Breast epithelium (tissue), 4 donors: ENCODE measurements at regions of chr9 and their contacts with region 1.

Region 1: DNA sequence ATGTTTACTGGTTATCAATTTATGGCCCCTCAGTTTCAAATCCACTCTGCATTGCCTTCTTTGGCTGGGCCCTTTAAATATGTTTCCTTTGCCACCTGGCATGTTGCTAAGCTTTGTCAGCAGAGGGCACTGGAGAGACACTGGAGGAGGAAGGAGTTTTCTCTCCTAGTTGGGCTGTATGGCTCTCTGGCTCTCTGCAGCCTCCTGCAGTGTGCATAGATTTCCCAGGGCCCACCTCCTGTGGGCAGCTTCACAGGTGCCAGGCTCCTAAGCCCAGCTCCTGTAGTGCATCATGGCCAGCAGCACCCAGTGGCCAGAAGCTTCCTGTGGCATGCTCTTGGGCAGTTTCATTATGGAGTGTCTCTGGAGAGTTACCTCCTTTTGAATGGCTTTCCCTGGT is 23.3 kb downstream of the CAVIN4 start:
- DNase-seq: no peak
- H3K4me3 ChIP-seq: no peak overlapping the region
- H3K27ac ChIP-seq: no peak overlapping the region
- H3K4me1 ChIP-seq: no peaks in the 10 kb centered on the region
- H3K27me3 ChIP-seq: no peaks in the 10 kb centered on the region
- CTCF ChIP-seq: no peak
- POLR2A ChIP-seq: no peak

Region 2: GRCh38 chr9:99699396-99699795 is 901.8 kb before region 1 on chr9:
- intact Hi-C with region 1: no loop called
- DNase-seq: no peak
- H3K4me3 ChIP-seq: no peak overlapping the region
- H3K27ac ChIP-seq: no peak overlapping the region
- H3K4me1 ChIP-seq: no peaks in the 10 kb centered on the region
- H3K27me3 ChIP-seq: no peaks in the 10 kb centered on the region
- CTCF ChIP-seq: no peak
- POLR2A ChIP-seq: no peak

Region 3: GRCh38 chr9:100567856-100568255 is 33.4 kb before region 1 on chr9:
- intact Hi-C with region 1: loop called (anchors 2 kb)
- DNase-seq: no peak
- H3K4me3 ChIP-seq: no peak overlapping the region
- H3K27ac ChIP-seq: no peak overlapping the region
- H3K4me1 ChIP-seq: no peaks in the 10 kb centered on the region
- H3K27me3 ChIP-seq: no peaks in the 10 kb centered on the region
- CTCF ChIP-seq: no peak
- POLR2A ChIP-seq: no peak

Region 4: GRCh38 chr9:100819980-100820379 is 218.8 kb after region 1 on chr9:
- intact Hi-C with region 1: no loop called
- DNase-seq: no peak
- H3K4me3 ChIP-seq: no peak overlapping the region
- H3K27ac ChIP-seq: no peak overlapping the region
- H3K4me1 ChIP-seq: no peaks in the 10 kb centered on the region
- H3K27me3 ChIP-seq: no peaks in the 10 kb centered on the region
- CTCF ChIP-seq: no peak
- POLR2A ChIP-seq: no peak